A549 (cell line): ENCODE measurements at regions of chr3 and their contacts with region 1.

Region 1: DNA sequence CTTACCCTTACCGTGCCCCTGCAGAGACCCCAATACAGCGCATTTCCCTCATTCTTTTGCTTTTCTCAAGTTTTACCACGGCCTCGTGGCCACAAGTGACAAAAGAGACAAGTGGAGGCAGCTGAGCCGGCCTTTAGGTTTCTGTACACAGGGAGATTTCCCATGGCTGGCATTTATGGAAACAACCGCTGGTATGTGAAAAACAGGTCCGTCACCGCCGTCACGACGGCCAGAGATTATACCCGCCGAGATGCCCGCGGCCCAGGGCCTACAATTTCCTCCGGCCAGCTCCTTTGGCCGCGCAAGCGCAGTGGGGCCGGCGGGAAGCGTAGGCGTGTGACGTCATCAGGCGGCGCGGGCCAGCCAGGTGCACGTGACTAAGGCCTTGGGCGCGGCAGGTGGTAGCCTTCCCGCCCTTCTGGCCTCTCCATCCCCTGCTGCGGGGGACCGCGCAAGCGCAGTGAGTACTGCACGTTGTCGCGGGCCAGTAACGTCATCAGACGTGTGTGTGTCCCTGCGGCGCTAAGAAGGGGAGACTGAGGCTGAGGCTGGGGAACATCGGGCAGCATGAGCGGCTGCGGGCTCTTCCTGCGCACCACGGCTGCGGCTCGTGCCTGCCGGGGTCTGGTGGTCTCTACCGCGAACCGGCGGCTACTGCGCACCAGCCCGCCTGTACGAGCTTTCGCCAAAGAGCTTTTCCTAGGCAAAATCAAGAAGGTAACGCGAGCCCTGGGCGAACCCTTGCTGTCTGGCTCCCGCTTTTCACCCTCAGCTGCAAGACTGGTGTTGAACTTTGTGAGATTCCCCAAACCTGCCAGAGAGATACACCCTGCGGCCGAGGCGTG is at the start of gene ACAD9:
- DNase-seq: peak; percentile 95 to 98
- ATAC-seq: peak; percentile 86 to 91
- H3K4me3 ChIP-seq: peak within 1 kb of the TSS; percentile 93
- H3K27ac ChIP-seq: peak within 1 kb of the TSS; percentile 96 to 97
- H3K4me1 ChIP-seq: peaks cover 21% of the 10 kb centered on the region; the same call in 2 of the 3 replicates
- CTCF ChIP-seq: no peak
- EP300 ChIP-seq: no peak
- POLR2A ChIP-seq: peak; percentile 56
- RAD21 ChIP-seq: no peak
- polyA plus RNA-seq, gene ACAD9: 24.1 and 26.1 TPM in 2 replicates

Region 2: GRCh38 chr3:128845778-128846485 is 33.4 kb before region 1 on chr3:
- CTCF ChIA-PET with region 1: interaction called, 13 read pairs
- POLR2A ChIA-PET with region 1: interaction called, 3 read pairs
- DNase-seq: peak; percentile 53 to 62
- ATAC-seq: peak; percentile 85 to 90
- H3K4me3 ChIP-seq: peak overlapping the region; percentile 43
- H3K27ac ChIP-seq: peak overlapping the region; percentile 62 to 88
- H3K4me1 ChIP-seq: 0 out of 3 replicates have a peak, but pooled peaks cover 9% of the 10 kb centered on the region
- CTCF ChIP-seq: peak; percentile 43
- EP300 ChIP-seq: no peak
- POLR2A ChIP-seq: no peak
- RAD21 ChIP-seq: peak; percentile 17 to 32; a peak in 3 of 5 replicates